ENCODE measurements at regions of chr11 and their contacts with region 1.

Region 1: GRCh38 chr11:93543292-93543977 is at the start of gene SMCO4:
- DNase-seq: peak; percentile 71 to 80 (median 79)
- H3K4me3 ChIP-seq: peak within 1 kb of the TSS; percentile 74 to 85 (median 79)
- H3K4me3 Mint-ChIP-seq: peak within 1 kb of the TSS; percentile 86 to 95
- H3K27ac ChIP-seq: peak within 1 kb of the TSS; percentile 91 to 93
- H3K27ac Mint-ChIP-seq: peak within 1 kb of the TSS; percentile 92 to 97 (median 96)
- H3K4me1 ChIP-seq: peaks cover 45 to 50% of the 10 kb centered on the region in 2 donors
- H3K4me1 Mint-ChIP-seq: peaks cover 50% of the 10 kb centered on the region
- H3K27me3 ChIP-seq: no peaks in the 10 kb centered on the region
- H3K27me3 Mint-ChIP-seq: peaks cover 0 to 5% (median 4%) of the 10 kb centered on the region in 3 donors
- CTCF ChIP-seq: peak; percentile 76
- polyA plus RNA-seq, gene SMCO4: 110 to 242 (median 169) TPM

Region 2: GRCh38 chr11:93234602-93235207 is 308.7 kb before region 1 on chr11:
- intact Hi-C with region 1: loop called (anchors 5 to 10 kb)
- DNase-seq: peak; percentile 53 to 70 (median 69)
- H3K4me3 ChIP-seq: no peak overlapping the region
- H3K4me3 Mint-ChIP-seq: no peak overlapping the region
- H3K27ac ChIP-seq: no peak overlapping the region
- H3K27ac Mint-ChIP-seq: no peak overlapping the region
- H3K4me1 ChIP-seq: no peaks in the 10 kb centered on the region
- H3K4me1 Mint-ChIP-seq: no peaks in the 10 kb centered on the region
- H3K27me3 ChIP-seq: peaks cover 0 to 2% of the 10 kb centered on the region in 2 donors
- H3K27me3 Mint-ChIP-seq: peaks cover 2 to 9% (median 4%) of the 10 kb centered on the region in 3 donors
- CTCF ChIP-seq: peak; percentile 94

Region 3: GRCh38 chr11:93407777-93408401 is 135.5 kb before region 1 on chr11:
- intact Hi-C with region 1: loop called in 1 of 2 experiments (anchors 10 kb)
- DNase-seq: peak; percentile 15 to 27 (median 23)
- H3K4me3 ChIP-seq: no peak overlapping the region
- H3K4me3 Mint-ChIP-seq: no peak overlapping the region
- H3K27ac ChIP-seq: no peak overlapping the region
- H3K27ac Mint-ChIP-seq: no peak overlapping the region
- H3K4me1 ChIP-seq: no peaks in the 10 kb centered on the region
- H3K4me1 Mint-ChIP-seq: no peaks in the 10 kb centered on the region
- H3K27me3 ChIP-seq: no peaks in the 10 kb centered on the region
- H3K27me3 Mint-ChIP-seq: peaks cover 0 to 3% (median 0%) of the 10 kb centered on the region in 3 donors
- CTCF ChIP-seq: no peak

Region 4: DNA sequence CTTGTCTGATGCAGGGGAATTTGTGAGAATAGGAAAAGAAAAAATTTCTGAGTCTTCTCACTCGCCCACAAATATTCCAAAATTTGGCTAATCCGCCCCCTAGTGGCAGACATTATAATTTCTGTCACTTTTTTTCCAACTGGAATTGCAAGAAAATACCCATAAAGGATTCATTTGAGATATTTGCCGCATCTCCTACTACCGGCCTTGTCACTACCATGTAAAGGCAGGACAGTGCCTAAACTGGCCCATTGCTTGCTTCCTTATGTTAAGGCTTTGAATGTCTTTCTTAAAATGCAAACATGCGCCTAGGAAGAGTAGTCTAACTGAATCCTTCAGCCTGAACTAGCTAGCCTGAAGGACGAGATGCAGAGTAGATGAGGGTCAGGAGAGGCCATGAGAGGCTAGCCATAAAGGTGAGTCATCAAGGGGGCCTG is 108.7 kb after region 1 on chr11:
- intact Hi-C with region 1: loop called (anchors 5 to 10 kb)
- DNase-seq: peak in 2 of 3 donors; percentile 28 to 37
- H3K4me3 ChIP-seq: no peak overlapping the region
- H3K4me3 Mint-ChIP-seq: no peak overlapping the region
- H3K27ac ChIP-seq: no peak overlapping the region
- H3K27ac Mint-ChIP-seq: peak overlapping the region in 5 of 7 donors; percentile 1 to 32 (median 16)
- H3K4me1 ChIP-seq: peaks cover 36 to 40% of the 10 kb centered on the region in 2 donors
- H3K4me1 Mint-ChIP-seq: peaks cover 39% of the 10 kb centered on the region
- H3K27me3 ChIP-seq: peaks cover 0 to 3% of the 10 kb centered on the region in 2 donors
- H3K27me3 Mint-ChIP-seq: peaks cover 0 to 9% (median 2%) of the 10 kb centered on the region in 3 donors
- CTCF ChIP-seq: peak; percentile 94